ENCODE measurements at regions of chr9 and their contacts with region 1.

Region 1: GRCh38 chr9:83980395-83981125 is at the start of gene RMI1:
- DNase-seq: peak; percentile 95 to 99 (median 98)
- ATAC-seq: peak; percentile 88
- H3K4me3 ChIP-seq: peak within 1 kb of the TSS; percentile 93
- H3K4me3 Mint-ChIP-seq: peak within 1 kb of the TSS; percentile 91 to 100 (median 99)
- H3K27ac ChIP-seq: peak within 1 kb of the TSS; percentile 99
- H3K27ac Mint-ChIP-seq: peak within 1 kb of the TSS; percentile 97 to 100 (median 99)
- H3K4me1 ChIP-seq: peaks cover 21 to 27% of the 10 kb centered on the region in 2 donors
- H3K4me1 Mint-ChIP-seq: peaks cover 28 to 52% (median 46%) of the 10 kb centered on the region in 7 donors
- H3K27me3 ChIP-seq: no peaks in the 10 kb centered on the region
- H3K27me3 Mint-ChIP-seq: no peaks in the 10 kb centered on the region
- total RNA-seq, gene RMI1: 1.6 to 24.8 (median 5.2) TPM

Region 2: DNA sequence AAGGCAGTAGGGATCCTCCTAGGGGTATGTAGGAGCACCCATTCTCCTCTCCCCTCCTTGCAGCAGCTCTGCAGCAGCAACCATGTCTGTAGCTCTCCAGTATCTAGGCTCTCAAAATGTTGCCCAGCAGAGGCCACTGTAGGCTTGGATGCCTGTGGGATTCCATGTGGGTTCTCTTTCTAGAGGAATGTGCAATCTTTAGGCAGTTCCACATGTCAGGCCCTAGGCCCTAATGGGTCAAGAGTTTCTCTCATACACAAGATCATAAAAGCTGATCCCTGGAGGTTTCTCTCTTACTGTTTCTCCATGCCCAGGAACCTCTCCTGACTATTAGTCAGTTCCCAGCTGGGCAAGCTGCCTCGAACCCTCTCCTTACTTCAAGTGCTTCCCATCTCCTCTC is 658.1 kb before region 1 on chr9:
- CTCF ChIA-PET with region 1: no interaction called
- POLR2A ChIA-PET with region 1: no interaction called
- intact Hi-C with region 1: no loop called
- DNase-seq: no peak
- ATAC-seq: no peak
- H3K4me3 ChIP-seq: no peak overlapping the region
- H3K4me3 Mint-ChIP-seq: no peak overlapping the region
- H3K27ac ChIP-seq: no peak overlapping the region
- H3K27ac Mint-ChIP-seq: no peak overlapping the region
- H3K4me1 ChIP-seq: no peaks in the 10 kb centered on the region
- H3K4me1 Mint-ChIP-seq: no peaks in the 10 kb centered on the region
- H3K27me3 ChIP-seq: no peaks in the 10 kb centered on the region
- H3K27me3 Mint-ChIP-seq: no peaks in the 10 kb centered on the region

Region 3: GRCh38 chr9:83920927-83921707 is 59.4 kb before region 1 on chr9 and contains the start of gene KIF27:
- CTCF ChIA-PET with region 1: interaction called, 4 read pairs
- POLR2A ChIA-PET with region 1: interaction called, 44 read pairs
- intact Hi-C with region 1: loop called (anchors 1 kb)
- DNase-seq: peak; percentile 91 to 99 (median 93)
- ATAC-seq: peak; percentile 94
- H3K4me3 ChIP-seq: peak within 1 kb of the TSS; percentile 59
- H3K4me3 Mint-ChIP-seq: peak within 1 kb of the TSS; percentile 87 to 96 (median 92)
- H3K27ac ChIP-seq: peak within 1 kb of the TSS; percentile 96
- H3K27ac Mint-ChIP-seq: peak within 1 kb of the TSS; percentile 89 to 98 (median 96)
- H3K4me1 ChIP-seq: peaks cover 4 to 8% of the 10 kb centered on the region in 2 donors
- H3K4me1 Mint-ChIP-seq: peaks cover 0 to 20% (median 13%) of the 10 kb centered on the region in 7 donors
- H3K27me3 ChIP-seq: no peaks in the 10 kb centered on the region
- H3K27me3 Mint-ChIP-seq: no peaks in the 10 kb centered on the region
- total RNA-seq, gene KIF27: 3.5 to 6.7 (median 5.3) TPM

Region 4: GRCh38 chr9:83965350-83966208 is 15.0 kb before region 1 on chr9:
- CTCF ChIA-PET with region 1: no interaction called
- POLR2A ChIA-PET with region 1: interaction called, 35 read pairs
- intact Hi-C with region 1: loop called (anchors 1 to 2 kb)
- DNase-seq: peak in 1 of 9 donors; percentile 15
- ATAC-seq: peak; percentile 27
- H3K4me3 ChIP-seq: no peak overlapping the region
- H3K4me3 Mint-ChIP-seq: no peak overlapping the region
- H3K27ac ChIP-seq: no peak overlapping the region
- H3K27ac Mint-ChIP-seq: peak overlapping the region in 8 of 9 donors; percentile 3 to 84 (median 41)
- H3K4me1 ChIP-seq: peaks cover 0 to 3% of the 10 kb centered on the region in 2 donors
- H3K4me1 Mint-ChIP-seq: peaks cover 1 to 22% (median 19%) of the 10 kb centered on the region in 7 donors
- H3K27me3 ChIP-seq: no peaks in the 10 kb centered on the region
- H3K27me3 Mint-ChIP-seq: no peaks in the 10 kb centered on the region

Region 5: DNA sequence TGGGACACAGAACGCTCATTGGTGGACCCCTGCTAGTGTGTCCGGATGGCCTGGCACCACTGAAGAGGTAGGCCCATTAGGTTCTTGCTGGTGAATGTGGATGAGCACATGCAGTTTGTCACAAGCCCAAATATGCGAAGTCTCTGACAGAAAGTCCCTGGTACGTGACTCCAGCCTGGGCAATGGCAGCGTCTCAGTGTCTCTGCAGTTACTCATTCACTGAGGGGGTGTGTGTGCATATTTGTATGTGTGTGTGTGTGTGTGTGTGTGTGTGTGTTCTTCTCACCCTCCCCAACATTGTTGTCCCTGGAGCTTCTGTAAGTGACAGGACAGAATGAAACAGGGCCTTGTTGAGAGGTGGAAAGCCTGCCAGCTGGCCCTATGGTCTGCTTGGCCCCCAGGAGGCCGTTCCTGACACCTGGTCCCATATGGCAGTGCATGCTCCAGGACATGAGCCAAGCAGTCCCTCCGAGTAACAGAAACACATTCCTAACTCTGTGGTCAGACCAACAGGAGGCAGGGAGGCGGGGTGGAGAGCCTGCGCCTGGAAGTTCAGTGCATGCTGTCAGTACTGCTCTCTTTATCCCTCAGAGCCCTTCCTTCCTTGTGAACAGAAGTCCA is 190.1 kb after region 1 on chr9:
- CTCF ChIA-PET with region 1: no interaction called
- POLR2A ChIA-PET with region 1: interaction called, 3 read pairs
- intact Hi-C with region 1: loop called in 1 of 2 experiments (anchors 1 kb)
- DNase-seq: no peak
- ATAC-seq: no peak
- H3K4me3 ChIP-seq: no peak overlapping the region
- H3K4me3 Mint-ChIP-seq: no peak overlapping the region
- H3K27ac ChIP-seq: no peak overlapping the region
- H3K27ac Mint-ChIP-seq: no peak overlapping the region
- H3K4me1 ChIP-seq: no peaks in the 10 kb centered on the region
- H3K4me1 Mint-ChIP-seq: peaks cover 0 to 5% (median 0%) of the 10 kb centered on the region in 7 donors
- H3K27me3 ChIP-seq: no peaks in the 10 kb centered on the region
- H3K27me3 Mint-ChIP-seq: peaks cover 0 to 8% (median 5%) of the 10 kb centered on the region in 5 donors

Region 6: GRCh38 chr9:84315278-84315877 is 334.8 kb after region 1 on chr9:
- CTCF ChIA-PET with region 1: no interaction called
- POLR2A ChIA-PET with region 1: interaction called, 3 read pairs
- intact Hi-C with region 1: loop called in 1 of 2 experiments (anchors 1 kb)
- DNase-seq: peak; percentile 9 to 49 (median 39)
- ATAC-seq: peak; percentile 73
- H3K4me3 ChIP-seq: no peak overlapping the region
- H3K4me3 Mint-ChIP-seq: peak overlapping the region in 1 of 10 donors; percentile 13
- H3K27ac ChIP-seq: no peak overlapping the region
- H3K27ac Mint-ChIP-seq: no peak overlapping the region
- H3K4me1 ChIP-seq: no peaks in the 10 kb centered on the region
- H3K4me1 Mint-ChIP-seq: peaks cover 0 to 35% (median 0%) of the 10 kb centered on the region in 7 donors
- H3K27me3 ChIP-seq: no peaks in the 10 kb centered on the region
- H3K27me3 Mint-ChIP-seq: no peaks in the 10 kb centered on the region